Activated CD4-positive, alpha-beta memory T cell treated with anti-CD3 and anti-CD28 coated beads for 36 hours (primary cell): ENCODE measurements at regions of chr1 and their contacts with region 1.

Region 1: GRCh38 chr1:36160949-36161485 is 5.1 kb downstream of the MAP7D1 start:
- DNase-seq: peak; percentile 88
- H3K4me3 Mint-ChIP-seq: peak overlapping the region; percentile 72
- H3K27ac Mint-ChIP-seq: peak overlapping the region; percentile 95
- H3K4me1 Mint-ChIP-seq: peaks cover 59% of the 10 kb centered on the region
- H3K27me3 Mint-ChIP-seq: no peaks in the 10 kb centered on the region

Region 2: DNA sequence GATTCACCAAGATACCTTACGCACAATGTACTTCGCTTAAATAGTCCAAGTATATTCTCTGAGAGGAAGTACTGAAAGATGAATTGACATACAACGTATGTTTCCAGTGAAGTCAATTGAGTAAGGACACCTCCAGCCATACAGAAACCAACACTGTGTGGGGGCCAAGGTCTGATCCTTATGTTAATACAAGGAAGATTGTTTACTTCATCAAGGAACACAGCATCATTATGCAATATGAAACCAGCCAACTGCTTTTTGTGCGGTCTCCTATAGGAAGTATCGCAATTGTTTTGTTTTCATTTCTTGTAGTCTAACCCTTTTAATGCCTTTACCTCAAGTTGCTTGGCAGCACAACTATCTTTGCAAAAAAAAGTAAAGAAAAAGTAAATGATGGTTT is 105.3 kb before region 1 on chr1:
- CTCF ChIA-PET with region 1: no interaction called
- POLR2A ChIA-PET with region 1: no interaction called
- intact Hi-C with region 1: no loop called
- DNase-seq: no peak
- H3K4me3 Mint-ChIP-seq: no peak overlapping the region
- H3K27ac Mint-ChIP-seq: no peak overlapping the region
- H3K4me1 Mint-ChIP-seq: no peaks in the 10 kb centered on the region
- H3K27me3 Mint-ChIP-seq: no peaks in the 10 kb centered on the region

Region 3: GRCh38 chr1:36300526-36300925 is 139.5 kb after region 1 on chr1:
- CTCF ChIA-PET with region 1: interaction called, 11 read pairs
- POLR2A ChIA-PET with region 1: interaction called, 3 read pairs
- intact Hi-C with region 1: no loop called
- DNase-seq: peak; percentile 44
- H3K4me3 Mint-ChIP-seq: peak overlapping the region; percentile 3
- H3K27ac Mint-ChIP-seq: peak overlapping the region; percentile 95
- H3K4me1 Mint-ChIP-seq: peaks cover 61% of the 10 kb centered on the region
- H3K27me3 Mint-ChIP-seq: no peaks in the 10 kb centered on the region